BJ (cell line): ENCODE measurements at regions of chr15 and their contacts with region 1.

Region 1: DNA sequence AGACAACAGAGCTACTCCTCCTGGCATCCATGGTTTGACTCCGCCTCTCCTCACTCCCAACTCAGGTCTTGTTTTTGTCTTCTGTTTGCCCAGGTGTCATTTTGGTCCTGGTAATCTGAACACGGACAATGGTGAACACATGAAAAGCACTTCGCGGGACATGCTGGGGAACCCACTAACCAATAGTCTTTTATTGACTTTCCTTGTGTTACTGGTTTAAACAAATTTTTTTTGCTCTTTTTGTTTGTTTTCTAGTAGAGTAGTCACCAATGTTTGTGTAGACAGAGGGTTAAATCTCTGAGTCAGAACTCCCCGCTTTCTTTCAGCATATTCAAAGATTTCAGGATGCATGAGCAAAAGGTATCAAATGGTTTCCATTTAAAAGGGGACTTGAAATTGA is 38.3 kb downstream of the LARP6 start:
- DNase-seq: no peak
- H3K4me3 ChIP-seq: no peak overlapping the region
- H3K27me3 ChIP-seq: no peaks in the 10 kb centered on the region
- CTCF ChIP-seq: no peak

Region 2: GRCh38 chr15:70569091-70569621 is 246.5 kb before region 1 on chr15:
- CTCF ChIA-PET with region 1: interaction called, 11 read pairs
- POLR2A ChIA-PET with region 1: no interaction called
- DNase-seq: no peak
- H3K4me3 ChIP-seq: no peak overlapping the region
- H3K27me3 ChIP-seq: peaks cover 1% of the 10 kb centered on the region
- CTCF ChIP-seq: peak; percentile 76

Region 3: DNA sequence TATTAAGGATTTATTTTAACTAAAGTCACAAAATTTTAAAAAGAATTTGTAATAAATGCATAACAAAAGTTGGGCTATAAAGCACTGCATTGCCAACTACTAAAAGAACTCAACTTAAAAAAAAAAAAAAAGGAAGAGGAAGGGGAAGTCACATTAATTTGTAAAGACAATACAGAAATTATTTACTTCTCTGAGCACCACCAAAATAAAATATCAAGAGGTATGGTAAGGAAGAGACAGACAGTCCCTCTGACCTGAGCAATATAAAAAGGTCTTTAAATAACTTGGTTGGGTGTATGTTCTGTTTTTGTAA is 135.8 kb before region 1 on chr15:
- CTCF ChIA-PET with region 1: interaction called, 53 read pairs
- POLR2A ChIA-PET with region 1: no interaction called
- DNase-seq: no peak
- H3K4me3 ChIP-seq: no peak overlapping the region
- H3K27me3 ChIP-seq: no peaks in the 10 kb centered on the region
- CTCF ChIP-seq: no peak

Region 4: GRCh38 chr15:70722266-70723121 is 93.2 kb before region 1 on chr15:
- CTCF ChIA-PET with region 1: interaction called, 37 read pairs
- POLR2A ChIA-PET with region 1: no interaction called
- DNase-seq: no peak
- H3K4me3 ChIP-seq: no peak overlapping the region
- H3K27me3 ChIP-seq: no peaks in the 10 kb centered on the region
- CTCF ChIP-seq: peak; percentile 68

Region 5: DNA sequence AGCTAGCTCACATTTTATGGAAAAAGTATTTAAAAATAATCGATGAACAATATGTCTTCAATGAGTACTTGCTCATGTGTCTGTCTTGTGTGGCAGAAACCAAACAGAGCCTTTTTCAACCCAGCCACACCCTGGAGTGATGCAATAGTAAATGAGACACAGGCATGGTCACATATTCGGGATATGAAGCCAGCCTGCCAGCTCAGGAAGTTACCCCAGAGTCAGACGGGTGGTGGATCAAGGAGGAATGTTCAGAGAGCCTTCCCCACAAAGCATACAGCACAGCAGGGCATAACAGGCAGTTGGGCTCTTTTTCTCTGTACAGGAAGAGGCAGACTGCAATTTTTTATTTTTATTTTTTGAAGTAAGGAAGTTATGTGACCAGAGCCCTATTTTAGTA is 11.0 kb after region 1 on chr15:
- CTCF ChIA-PET with region 1: interaction called, 11 read pairs
- POLR2A ChIA-PET with region 1: no interaction called
- DNase-seq: peak; percentile 78
- H3K4me3 ChIP-seq: no peak overlapping the region
- H3K27me3 ChIP-seq: no peaks in the 10 kb centered on the region
- CTCF ChIP-seq: no peak